Prostate gland (tissue), 2 donors: ENCODE measurements at regions of chr10 and their contacts with region 1.

Region 1: DNA sequence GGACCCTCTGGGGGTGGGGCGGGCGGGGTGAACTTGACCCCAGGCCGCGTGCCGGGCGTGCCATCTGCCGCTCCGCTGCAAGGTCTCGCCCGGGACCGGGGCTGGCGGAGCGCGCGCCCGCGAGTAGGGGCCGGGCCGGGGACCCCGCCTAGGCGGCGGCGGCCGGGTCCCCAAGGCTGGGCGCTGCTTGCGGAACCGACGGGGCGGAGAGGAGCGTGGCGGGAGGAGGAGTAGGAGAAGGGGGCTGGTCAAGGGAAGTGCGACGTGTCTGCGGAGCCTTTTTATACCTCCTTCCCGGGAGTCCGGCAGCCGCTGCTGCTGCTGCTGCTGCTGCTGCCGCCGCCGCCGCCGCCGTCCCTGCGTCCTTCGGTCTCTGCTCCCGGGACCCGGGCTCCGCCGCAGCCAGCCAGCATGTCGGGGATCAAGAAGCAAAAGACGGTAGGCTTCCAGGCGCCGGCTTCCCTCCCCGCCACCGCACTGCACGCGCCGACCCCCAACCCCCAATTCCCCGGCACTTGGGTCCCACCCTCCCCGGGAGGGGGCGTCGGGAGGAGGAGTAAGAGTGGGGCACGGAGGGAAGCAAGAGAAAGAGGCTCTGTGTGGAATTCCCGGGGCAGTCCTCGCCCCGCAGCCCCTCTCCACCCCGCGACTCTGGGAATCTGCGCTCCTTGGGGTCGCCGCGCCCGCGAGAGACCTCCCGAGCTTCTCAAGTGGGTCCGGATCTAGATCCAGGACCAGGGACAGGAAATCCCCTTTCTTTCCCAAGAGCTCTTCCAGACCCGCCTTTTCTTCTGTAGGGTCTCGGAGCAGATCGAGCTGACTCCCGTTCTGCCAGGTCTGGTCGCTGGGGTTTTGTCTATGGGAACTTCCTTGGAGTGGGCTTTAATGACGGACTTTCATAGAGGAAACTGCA is at the start of gene PAPSS2:
- DNase-seq: peak; percentile 5
- H3K4me3 ChIP-seq: peak within 1 kb of the TSS; percentile 53 to 58
- H3K27ac ChIP-seq: peak within 1 kb of the TSS; percentile 55 to 65
- H3K4me1 ChIP-seq: no peaks in the 10 kb centered on the region
- H3K27me3 ChIP-seq: no peaks in the 10 kb centered on the region
- CTCF ChIP-seq: no peak
- POLR2A ChIP-seq: no peak
- total RNA-seq, gene PAPSS2: 5.5 to 9.0 TPM

Region 2: DNA sequence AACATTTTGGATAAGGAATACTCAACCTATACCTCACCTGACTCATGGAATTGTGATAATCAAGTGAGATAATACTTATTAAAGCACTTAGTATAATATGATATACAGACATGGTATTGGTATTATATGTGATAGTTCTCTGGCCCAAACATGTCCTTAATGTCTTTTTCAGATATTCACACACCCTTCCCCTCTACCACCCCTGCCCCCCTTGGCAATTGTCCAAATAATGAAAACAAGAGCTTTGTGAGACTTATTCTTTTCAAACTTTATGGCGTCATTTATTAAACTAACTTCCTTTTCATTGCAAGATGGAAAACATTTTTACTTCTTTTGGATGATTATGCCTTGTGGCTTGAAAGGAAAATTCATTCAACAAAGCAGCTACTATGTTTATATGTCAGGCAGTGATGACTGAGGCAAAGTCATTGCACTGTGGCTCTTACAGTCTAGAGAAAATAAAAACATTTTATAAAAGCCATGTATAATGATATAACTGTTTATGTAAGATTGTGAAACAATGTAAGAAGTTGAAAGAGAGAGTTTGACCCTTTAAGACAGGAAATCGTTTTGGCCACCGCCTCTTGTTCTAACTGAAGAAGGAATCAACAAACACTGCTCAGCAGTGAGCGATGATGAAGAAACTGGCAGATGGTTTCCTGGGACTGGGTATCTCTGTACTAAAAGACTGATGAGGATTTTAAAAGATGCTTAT is 127.8 kb before region 1 on chr10:
- intact Hi-C with region 1: loop called (anchors 5 kb)
- DNase-seq: no peak
- H3K4me3 ChIP-seq: no peak overlapping the region
- H3K27ac ChIP-seq: peak overlapping the region; percentile 23 to 27
- H3K4me1 ChIP-seq: no peaks in the 10 kb centered on the region
- H3K27me3 ChIP-seq: no peaks in the 10 kb centered on the region
- CTCF ChIP-seq: no peak
- POLR2A ChIP-seq: no peak

Region 3: GRCh38 chr10:87605628-87606308 is 54.1 kb before region 1 on chr10:
- intact Hi-C with region 1: no loop called
- DNase-seq: no peak
- H3K4me3 ChIP-seq: no peak overlapping the region
- H3K27ac ChIP-seq: peak overlapping the region in 1 of 2 donors; percentile 28
- H3K4me1 ChIP-seq: no peaks in the 10 kb centered on the region
- H3K27me3 ChIP-seq: no peaks in the 10 kb centered on the region
- CTCF ChIP-seq: no peak
- POLR2A ChIP-seq: no peak

Region 4: GRCh38 chr10:87734987-87735827 is 75.4 kb after region 1 on chr10:
- intact Hi-C with region 1: loop called (anchors 5 kb)
- DNase-seq: no peak
- H3K4me3 ChIP-seq: no peak overlapping the region
- H3K27ac ChIP-seq: no peak overlapping the region
- H3K4me1 ChIP-seq: no peaks in the 10 kb centered on the region
- H3K27me3 ChIP-seq: no peaks in the 10 kb centered on the region
- CTCF ChIP-seq: peak; percentile 53 to 76 (median 70)
- POLR2A ChIP-seq: no peak